CD4-positive, alpha-beta memory T cell (primary cell): ENCODE measurements at regions of chr2 and their contacts with region 1.

Region 1: GRCh38 chr2:6945087-6945813 is 28.0 kb downstream of the RNF144A start:
- DNase-seq: no peak
- H3K4me3 ChIP-seq: no peak overlapping the region
- H3K4me3 Mint-ChIP-seq: peak overlapping the region in 1 of 8 donors; percentile 0
- H3K27ac ChIP-seq: no peak overlapping the region
- H3K27ac Mint-ChIP-seq: peak overlapping the region in 6 of 7 donors; percentile 10 to 68 (median 63)
- H3K4me1 ChIP-seq: peaks cover 8% of the 10 kb centered on the region
- H3K4me1 Mint-ChIP-seq: peaks cover 24 to 57% (median 27%) of the 10 kb centered on the region in 4 donors
- H3K27me3 ChIP-seq: no peaks in the 10 kb centered on the region
- H3K27me3 Mint-ChIP-seq: no peaks in the 10 kb centered on the region

Region 2: GRCh38 chr2:6909431-6910385 is 35.5 kb before region 1 on chr2:
- CTCF ChIA-PET with region 1: no interaction called
- POLR2A ChIA-PET with region 1: no interaction called
- intact Hi-C with region 1: no loop called
- DNase-seq: peak; percentile 73 to 81 (median 75)
- H3K4me3 ChIP-seq: peak overlapping the region in 1 of 2 donors; percentile 40
- H3K4me3 Mint-ChIP-seq: peak overlapping the region; percentile 63 to 88 (median 78)
- H3K27ac ChIP-seq: peak overlapping the region; percentile 4
- H3K27ac Mint-ChIP-seq: peak overlapping the region; percentile 76 to 98 (median 93)
- H3K4me1 ChIP-seq: peaks cover 86% of the 10 kb centered on the region
- H3K4me1 Mint-ChIP-seq: peaks cover 72 to 91% (median 78%) of the 10 kb centered on the region in 4 donors
- H3K27me3 ChIP-seq: no peaks in the 10 kb centered on the region
- H3K27me3 Mint-ChIP-seq: no peaks in the 10 kb centered on the region

Region 3: DNA sequence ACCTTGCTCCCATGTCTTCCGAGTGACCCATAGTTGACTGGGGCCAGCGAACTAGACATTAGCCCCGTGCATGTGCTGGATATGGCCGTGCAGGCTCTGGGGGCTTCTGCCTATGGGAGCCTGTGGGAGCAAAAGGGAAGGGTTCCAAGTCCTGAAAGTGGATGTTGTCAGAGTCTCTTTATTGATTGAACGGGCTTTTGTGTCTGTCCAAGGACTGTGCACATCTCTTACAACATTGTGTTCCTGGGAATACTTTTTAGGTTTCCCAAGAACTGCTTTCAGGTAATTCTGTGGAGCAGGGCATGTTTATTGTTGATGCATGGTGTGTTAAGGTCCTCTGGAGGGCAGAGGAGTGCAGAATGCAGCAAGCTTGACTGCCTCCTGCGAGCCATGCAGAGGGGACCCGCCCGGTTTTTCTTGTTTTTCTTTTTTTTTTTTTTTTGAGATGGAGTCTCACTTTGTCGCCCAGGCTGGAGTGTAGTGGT is 23.0 kb before region 1 on chr2:
- CTCF ChIA-PET with region 1: no interaction called
- POLR2A ChIA-PET with region 1: interaction called, 3 read pairs
- intact Hi-C with region 1: loop called (anchors 1 kb)
- DNase-seq: no peak
- H3K4me3 ChIP-seq: no peak overlapping the region
- H3K4me3 Mint-ChIP-seq: no peak overlapping the region
- H3K27ac ChIP-seq: no peak overlapping the region
- H3K27ac Mint-ChIP-seq: peak overlapping the region in 1 of 7 donors; percentile 25
- H3K4me1 ChIP-seq: peaks cover 59% of the 10 kb centered on the region
- H3K4me1 Mint-ChIP-seq: peaks cover 45 to 87% (median 66%) of the 10 kb centered on the region in 4 donors
- H3K27me3 ChIP-seq: no peaks in the 10 kb centered on the region
- H3K27me3 Mint-ChIP-seq: no peaks in the 10 kb centered on the region

Region 4: GRCh38 chr2:6957910-6958615 is 12.8 kb after region 1 on chr2:
- CTCF ChIA-PET with region 1: interaction called, 3 read pairs
- POLR2A ChIA-PET with region 1: no interaction called
- intact Hi-C with region 1: loop called (anchors 1 kb)
- DNase-seq: no peak
- H3K4me3 ChIP-seq: no peak overlapping the region
- H3K4me3 Mint-ChIP-seq: no peak overlapping the region
- H3K27ac ChIP-seq: no peak overlapping the region
- H3K27ac Mint-ChIP-seq: peak overlapping the region in 1 of 7 donors; percentile 20
- H3K4me1 ChIP-seq: no peaks in the 10 kb centered on the region
- H3K4me1 Mint-ChIP-seq: peaks cover 20 to 57% (median 34%) of the 10 kb centered on the region in 4 donors
- H3K27me3 ChIP-seq: no peaks in the 10 kb centered on the region
- H3K27me3 Mint-ChIP-seq: no peaks in the 10 kb centered on the region

Region 5: DNA sequence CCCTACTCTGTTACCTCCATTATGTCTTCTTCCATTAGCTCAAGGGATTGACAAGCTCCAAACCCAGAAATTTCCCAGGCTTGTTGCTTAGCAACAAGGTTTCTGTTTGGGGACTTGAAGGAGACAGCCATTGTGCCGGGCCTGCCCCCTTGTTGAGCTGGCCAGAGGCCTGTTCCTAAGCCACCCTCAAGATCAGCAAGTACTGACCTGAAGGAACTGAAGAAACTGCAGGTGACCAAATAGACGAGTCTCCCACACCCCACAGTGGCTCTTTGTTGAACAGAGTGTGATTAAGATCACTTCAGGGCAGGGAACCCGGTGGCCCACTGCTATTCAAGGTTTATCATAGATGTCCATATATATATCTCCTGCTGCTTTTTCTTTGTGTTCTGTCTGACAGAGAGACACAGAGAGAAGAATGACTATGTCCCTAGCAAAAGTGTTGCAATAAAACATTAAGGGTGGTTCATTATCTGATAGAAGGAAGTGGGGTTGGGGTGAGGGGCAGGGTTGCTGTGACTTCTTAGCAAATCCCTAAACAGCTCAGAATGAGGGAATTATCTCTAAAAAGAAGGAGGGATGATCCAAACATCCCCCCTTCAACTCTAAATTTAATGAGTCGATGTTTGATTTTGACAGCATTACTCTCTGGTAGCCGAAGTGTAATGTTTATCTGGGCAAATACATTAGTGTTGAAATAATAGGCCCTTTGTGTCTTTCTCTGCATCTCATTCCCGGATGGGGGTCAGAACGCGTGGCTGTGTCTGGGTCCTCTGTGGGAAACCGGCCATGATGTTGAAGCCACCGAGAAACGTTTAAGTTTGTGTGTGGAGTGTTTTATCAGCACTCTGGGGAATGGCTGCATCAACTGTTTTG is 41.3 kb after region 1 on chr2:
- CTCF ChIA-PET with region 1: no interaction called
- POLR2A ChIA-PET with region 1: no interaction called
- intact Hi-C with region 1: no loop called
- DNase-seq: no peak
- H3K4me3 ChIP-seq: no peak overlapping the region
- H3K4me3 Mint-ChIP-seq: peak overlapping the region in 2 of 8 donors; percentile 4 to 18
- H3K27ac ChIP-seq: no peak overlapping the region
- H3K27ac Mint-ChIP-seq: peak overlapping the region in 1 of 7 donors; percentile 48
- H3K4me1 ChIP-seq: no peaks in the 10 kb centered on the region
- H3K4me1 Mint-ChIP-seq: peaks cover 5 to 37% (median 20%) of the 10 kb centered on the region in 4 donors
- H3K27me3 ChIP-seq: no peaks in the 10 kb centered on the region
- H3K27me3 Mint-ChIP-seq: no peaks in the 10 kb centered on the region

Region 6: GRCh38 chr2:7584017-7584416 is 638.8 kb after region 1 on chr2:
- CTCF ChIA-PET with region 1: no interaction called
- POLR2A ChIA-PET with region 1: no interaction called
- intact Hi-C with region 1: no loop called
- DNase-seq: no peak
- H3K4me3 ChIP-seq: no peak overlapping the region
- H3K4me3 Mint-ChIP-seq: no peak overlapping the region
- H3K27ac ChIP-seq: no peak overlapping the region
- H3K27ac Mint-ChIP-seq: no peak overlapping the region
- H3K4me1 ChIP-seq: no peaks in the 10 kb centered on the region
- H3K4me1 Mint-ChIP-seq: peaks cover 0 to 2% (median 0%) of the 10 kb centered on the region in 4 donors
- H3K27me3 ChIP-seq: no peaks in the 10 kb centered on the region
- H3K27me3 Mint-ChIP-seq: no peaks in the 10 kb centered on the region